Common myeloid progenitor, CD34-positive (primary cell): ENCODE measurements at regions of chr1 and their contacts with region 1.

Region 1: GRCh38 chr1:152047730-152048402 is 11.1 kb upstream of the S100A11 start:
- DNase-seq: peak; percentile 94 to 99 (median 97)
- H3K4me3 ChIP-seq: peak overlapping the region in 5 of 7 experiments; percentile 1 to 68 (median 48)
- H3K27ac ChIP-seq: peak overlapping the region; percentile 74 to 91
- H3K4me1 ChIP-seq: peaks cover 10 to 55% (median 19%) of the 10 kb centered on the region in 4 experiments
- H3K27me3 ChIP-seq: peaks cover 0 to 3% (median 2%) of the 10 kb centered on the region in 5 experiments

Region 2: GRCh38 chr1:152034646-152035405 is 13.0 kb before region 1 on chr1:
- CTCF ChIA-PET with region 1: interaction called, 57 read pairs
- POLR2A ChIA-PET with region 1: interaction called, 21 read pairs
- DNase-seq: peak; percentile 65 to 82 (median 71)
- H3K4me3 ChIP-seq: peak overlapping the region in 6 of 7 experiments; percentile 76 to 92 (median 83)
- H3K27ac ChIP-seq: peak overlapping the region; percentile 14 to 80
- H3K4me1 ChIP-seq: peaks cover 29 to 52% (median 42%) of the 10 kb centered on the region in 4 experiments
- H3K27me3 ChIP-seq: no peaks in the 10 kb centered on the region

Region 3: DNA sequence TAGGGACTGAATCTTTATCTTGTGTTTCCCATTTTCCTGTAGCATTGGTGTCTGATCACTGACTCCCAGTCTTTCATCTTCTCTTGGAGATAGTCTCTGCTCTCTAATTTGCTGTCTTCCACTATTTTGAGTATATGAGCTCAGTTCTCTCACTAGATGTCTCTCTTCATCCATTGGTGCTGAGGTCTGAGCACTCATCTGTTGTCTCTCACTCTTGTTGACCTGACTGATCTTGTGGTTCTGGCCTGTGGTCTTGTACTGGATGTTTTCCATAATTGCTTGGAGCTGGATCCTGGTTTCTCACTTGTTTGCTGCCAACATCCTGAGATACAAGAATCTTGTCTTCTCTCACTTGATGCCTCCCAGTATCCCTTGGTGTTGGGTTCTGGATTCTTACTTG is 14.1 kb after region 1 on chr1:
- CTCF ChIA-PET with region 1: interaction called, 13 read pairs
- POLR2A ChIA-PET with region 1: no interaction called
- DNase-seq: no peak
- H3K4me3 ChIP-seq: no peak overlapping the region
- H3K27ac ChIP-seq: no peak overlapping the region
- H3K4me1 ChIP-seq: no peaks in the 10 kb centered on the region
- H3K27me3 ChIP-seq: peaks cover 3 to 40% (median 21%) of the 10 kb centered on the region in 5 experiments